ENCODE measurements at regions of chr1 and their contacts with region 1.

Region 1: GRCh38 chr1:156489166-156489934 is 11.2 kb downstream of the MEF2D start:
- DNase-seq: no peak
- H3K4me3 Mint-ChIP-seq: peak overlapping the region; percentile 30
- H3K27ac Mint-ChIP-seq: peak overlapping the region; percentile 6
- H3K4me1 Mint-ChIP-seq: peaks cover 65% of the 10 kb centered on the region
- H3K27me3 Mint-ChIP-seq: no peaks in the 10 kb centered on the region

Region 2: DNA sequence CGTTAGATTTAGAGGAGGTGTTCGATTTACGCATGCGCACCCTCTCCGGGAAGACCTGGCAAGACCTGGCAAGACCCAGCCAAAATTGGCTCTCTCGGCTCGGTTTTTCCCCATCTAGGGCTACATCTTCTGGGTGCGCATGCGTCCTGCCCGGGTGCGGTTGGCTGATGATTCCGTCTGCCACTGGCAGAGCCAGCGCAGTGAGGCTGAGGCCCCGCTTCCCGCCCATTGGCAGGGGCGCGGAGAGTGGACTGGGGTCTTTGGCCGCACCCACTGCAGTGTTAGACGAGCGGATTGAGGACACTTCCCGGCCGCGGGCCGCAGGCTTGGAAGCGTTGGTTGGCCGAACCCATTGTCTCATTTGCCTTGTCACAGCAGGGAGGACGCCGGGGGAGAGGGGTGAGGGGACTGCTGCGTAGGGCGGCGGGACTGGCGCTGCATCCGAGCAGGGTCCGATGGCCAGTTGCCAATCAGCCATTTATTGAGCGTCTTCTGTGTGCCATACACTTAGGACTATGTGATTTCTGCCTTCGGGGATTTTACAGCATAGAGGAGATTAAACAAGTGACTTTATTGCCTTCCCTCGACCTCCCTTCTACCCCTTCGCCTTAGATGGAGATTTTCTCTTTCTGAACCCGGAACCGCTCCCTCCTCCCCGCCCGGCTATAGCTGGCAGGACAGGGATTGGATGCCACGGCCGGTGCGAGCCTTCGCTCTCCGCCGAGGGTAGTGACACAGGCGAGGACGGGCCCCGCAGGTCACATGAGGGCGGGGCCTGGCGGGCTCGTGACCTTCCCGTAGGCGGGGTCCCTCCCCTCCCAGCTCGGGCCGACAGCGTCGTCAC is 32.5 kb before region 1 on chr1:
- intact Hi-C with region 1: loop called (anchors 2 kb)
- DNase-seq: peak; percentile 92
- H3K4me3 Mint-ChIP-seq: peak overlapping the region; percentile 84
- H3K27ac Mint-ChIP-seq: peak overlapping the region; percentile 97
- H3K4me1 Mint-ChIP-seq: peaks cover 21% of the 10 kb centered on the region
- H3K27me3 Mint-ChIP-seq: peaks cover 13% of the 10 kb centered on the region